AG04449 (cell line): ENCODE measurements at regions of chr20 and their contacts with region 1.

Region 1: GRCh38 chr20:9978397-9979004 is 56.3 kb upstream of the ANKEF1 start:
- DNase-seq: peak; percentile 58
- H3K4me3 ChIP-seq: no peak overlapping the region; the same call in 1 of the 2 replicates
- CTCF ChIP-seq: peak; percentile 69

Region 2: DNA sequence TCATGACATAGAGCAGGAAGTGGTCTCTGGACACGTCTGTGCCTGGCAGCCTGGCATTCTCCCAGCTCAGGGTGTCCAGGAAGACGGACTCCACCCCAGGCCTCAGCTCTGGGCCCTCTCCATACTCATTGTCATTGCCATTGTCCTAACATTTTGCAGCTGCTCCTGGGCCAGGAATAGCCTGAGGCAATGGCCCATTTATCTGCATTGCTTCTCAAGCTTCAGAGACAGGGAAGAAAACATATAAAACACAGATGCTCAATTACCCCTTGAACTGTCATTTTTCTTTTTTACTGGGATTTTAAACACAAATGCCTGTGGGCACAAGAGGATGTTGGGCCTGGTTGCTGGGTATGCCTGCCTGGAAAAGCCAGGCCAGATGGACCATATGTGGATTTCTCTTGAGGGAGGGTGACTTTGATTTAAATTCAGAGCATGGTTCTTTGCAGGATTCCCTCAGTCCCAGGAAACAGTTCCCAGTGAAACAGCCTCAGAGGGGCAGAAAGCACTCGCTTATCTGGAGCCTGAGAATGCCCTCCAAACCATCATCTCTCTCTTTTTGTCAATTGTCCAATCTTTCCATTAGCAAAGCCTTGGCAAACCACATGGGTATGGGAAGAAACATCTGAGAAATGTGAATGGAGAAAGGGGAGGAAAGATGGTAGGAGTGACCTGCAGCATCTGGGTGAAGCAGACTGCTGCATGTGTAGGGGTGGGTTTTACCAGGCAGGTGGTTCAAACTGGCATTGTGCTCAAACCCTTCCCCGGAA is 446.2 kb before region 1 on chr20:
- CTCF ChIA-PET with region 1: no interaction called
- POLR2A ChIA-PET with region 1: no interaction called
- DNase-seq: no peak
- H3K4me3 ChIP-seq: no peak overlapping the region
- CTCF ChIP-seq: no peak

Region 3: DNA sequence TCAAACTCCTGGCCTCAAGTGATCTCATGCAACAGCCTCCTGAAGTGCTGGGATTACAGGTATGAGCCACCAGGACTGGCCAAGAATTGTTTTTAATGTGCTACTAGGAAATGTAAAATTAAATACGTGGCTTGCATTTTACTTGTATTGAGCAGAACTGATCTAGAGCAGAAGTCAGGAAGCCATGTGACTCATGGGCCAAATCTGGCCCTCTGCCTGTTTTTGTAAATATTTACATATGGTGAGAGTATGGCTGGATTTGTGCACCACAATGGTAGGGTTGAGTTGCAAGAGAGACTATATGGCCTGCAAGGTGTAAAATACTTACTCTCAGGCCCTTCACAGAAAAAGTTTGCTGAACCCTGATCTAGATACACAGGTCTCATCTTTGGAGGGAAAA is 388.3 kb before region 1 on chr20:
- CTCF ChIA-PET with region 1: no interaction called
- POLR2A ChIA-PET with region 1: no interaction called
- DNase-seq: no peak
- H3K4me3 ChIP-seq: no peak overlapping the region
- CTCF ChIP-seq: no peak

Region 4: DNA sequence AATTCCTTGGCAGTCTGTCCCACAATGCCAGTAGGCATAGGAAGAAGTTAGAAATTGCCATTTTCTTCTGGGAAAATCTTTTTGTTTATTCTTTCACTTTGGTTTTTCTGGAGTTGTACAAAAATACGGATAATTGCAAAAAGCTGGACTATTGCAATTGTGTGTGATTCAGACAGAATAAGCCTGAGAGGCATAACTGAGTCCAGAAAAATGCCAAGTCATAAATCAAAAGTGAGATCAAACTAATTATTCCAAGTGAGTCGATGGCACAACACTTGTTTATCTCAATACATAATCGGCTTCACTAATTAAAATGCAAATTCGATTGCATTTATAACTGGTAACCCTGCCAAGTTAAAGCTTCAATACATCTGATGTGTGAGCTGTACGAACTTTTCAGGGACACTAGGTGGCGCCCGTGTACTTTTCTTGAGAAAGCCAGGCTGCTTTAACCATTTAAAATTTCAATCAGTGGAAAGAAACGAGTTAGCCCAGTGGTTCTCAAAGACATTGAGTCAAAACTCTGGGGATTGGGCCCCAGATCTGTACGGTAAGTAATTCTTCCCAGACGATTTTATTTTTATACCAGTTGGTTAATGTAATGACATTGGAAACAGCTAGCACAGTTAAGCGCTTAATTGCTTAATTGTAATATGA is 361.5 kb before region 1 on chr20:
- CTCF ChIA-PET with region 1: interaction called, 19 read pairs
- POLR2A ChIA-PET with region 1: no interaction called
- DNase-seq: peak; percentile 10
- H3K4me3 ChIP-seq: no peak overlapping the region
- CTCF ChIP-seq: peak; percentile 67

Region 5: GRCh38 chr20:9989066-9989724 is 10.7 kb after region 1 on chr20:
- CTCF ChIA-PET with region 1: interaction called, 18 read pairs
- POLR2A ChIA-PET with region 1: no interaction called
- DNase-seq: no peak
- H3K4me3 ChIP-seq: no peak overlapping the region
- CTCF ChIP-seq: no peak

Region 6: DNA sequence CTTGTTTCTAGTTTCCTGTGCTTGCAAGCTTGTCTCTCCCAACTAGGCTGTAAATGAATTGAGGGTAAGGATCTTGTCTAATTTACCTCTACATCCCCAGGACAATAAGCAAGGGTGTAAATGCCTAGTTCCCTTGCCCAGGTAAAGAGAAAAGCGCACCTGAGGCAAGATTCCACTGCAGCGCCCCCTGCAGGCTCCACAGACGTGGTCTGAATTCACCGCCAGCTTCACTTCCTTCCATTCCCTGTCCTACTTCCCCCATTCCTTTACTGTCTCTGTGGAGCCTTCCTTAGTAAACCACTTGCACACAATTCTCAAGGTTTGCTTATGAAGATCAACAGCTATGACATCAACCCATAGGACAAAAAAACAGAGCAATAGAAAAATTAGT is 98.6 kb after region 1 on chr20:
- CTCF ChIA-PET with region 1: interaction called, 10 read pairs
- POLR2A ChIA-PET with region 1: no interaction called
- DNase-seq: no peak
- H3K4me3 ChIP-seq: no peak overlapping the region
- CTCF ChIP-seq: peak; percentile 8

Region 7: DNA sequence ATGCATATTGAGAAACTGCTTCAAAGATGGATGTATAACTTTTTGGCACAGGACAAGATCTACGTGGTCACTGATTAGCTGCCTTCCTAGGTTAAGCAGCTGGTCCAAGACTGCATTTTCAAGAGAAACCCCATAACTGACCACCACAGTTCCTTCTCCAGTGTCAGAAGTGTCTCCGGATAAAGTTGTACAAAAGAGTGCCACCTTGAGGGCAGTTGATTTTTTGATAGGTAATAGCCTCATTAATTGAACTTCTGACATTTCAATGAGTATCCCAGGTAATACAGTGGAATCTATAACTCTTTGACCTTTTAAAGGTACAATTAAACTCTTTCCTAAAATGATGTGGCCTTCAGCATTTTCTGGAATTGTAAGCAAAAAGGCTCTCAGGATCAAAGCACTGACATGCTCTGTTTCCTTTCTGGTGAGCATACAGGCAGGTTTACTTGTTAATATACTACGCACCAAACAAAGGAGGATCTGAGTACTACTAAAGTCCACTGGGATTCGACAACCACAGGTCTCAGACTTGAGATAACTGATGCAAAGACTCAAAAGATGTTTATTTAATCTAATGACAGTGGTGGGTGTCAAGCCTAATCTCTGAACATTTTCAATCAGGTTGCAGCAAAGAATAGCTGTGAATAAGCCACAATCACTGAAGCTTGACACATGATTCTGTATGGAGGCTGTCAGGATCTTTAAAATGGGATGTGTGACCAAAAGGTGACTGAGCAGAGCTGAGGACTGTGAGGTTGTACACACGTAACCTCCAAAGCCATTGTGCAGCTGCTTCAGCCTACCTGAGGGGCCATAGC is 434.3 kb after region 1 on chr20:
- CTCF ChIA-PET with region 1: interaction called, 17 read pairs
- POLR2A ChIA-PET with region 1: no interaction called
- DNase-seq: no peak
- H3K4me3 ChIP-seq: no peak overlapping the region
- CTCF ChIP-seq: no peak

Region 8: GRCh38 chr20:10427060-10427692 is 448.7 kb after region 1 on chr20:
- CTCF ChIA-PET with region 1: interaction called, 279 read pairs
- POLR2A ChIA-PET with region 1: no interaction called
- DNase-seq: no peak
- H3K4me3 ChIP-seq: no peak overlapping the region
- CTCF ChIP-seq: peak; percentile 68